Posterior vena cava (tissue), 2 donors: ENCODE measurements at regions of chr5 and their contacts with region 1.

Region 1: DNA sequence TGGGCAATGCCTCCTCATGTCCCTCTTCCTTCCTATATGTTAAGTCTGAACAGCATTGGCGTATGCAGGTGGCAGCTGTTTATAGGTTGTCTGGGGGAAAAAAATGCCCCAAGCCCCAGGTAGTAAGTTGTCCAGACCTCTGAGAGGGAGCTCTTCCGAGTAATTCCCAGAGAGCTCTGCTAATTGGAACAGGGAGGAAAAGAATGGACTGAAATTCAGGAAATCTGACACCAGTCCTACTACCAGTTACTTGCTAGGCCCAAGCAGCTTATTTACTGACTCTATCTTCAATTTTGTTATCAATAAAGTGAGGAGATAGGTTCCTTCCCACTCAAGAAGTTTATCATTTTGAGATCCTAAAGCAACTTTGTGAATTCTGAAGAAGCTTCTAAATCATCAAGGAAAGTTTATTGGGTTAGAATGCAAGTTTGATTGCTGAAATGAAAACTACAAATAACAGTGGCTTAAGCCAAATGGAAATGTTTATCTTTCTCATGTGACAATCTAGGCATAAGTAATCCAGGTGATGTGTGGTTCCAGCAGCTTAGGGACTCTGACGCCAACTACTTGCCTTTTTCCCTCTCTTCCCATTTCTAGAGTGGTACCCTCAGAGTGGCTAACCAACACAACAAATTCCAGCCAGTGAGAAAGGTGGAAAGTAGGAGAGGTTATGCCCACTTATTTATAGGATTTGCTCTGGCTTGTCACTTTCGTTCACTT is 5.6 kb downstream of the STK32A start:
- DNase-seq: no peak

Region 2: GRCh38 chr5:146940295-146940694 is 300.1 kb before region 1 on chr5:
- intact Hi-C with region 1: loop called in 1 of 2 experiments (anchors 5 kb)
- DNase-seq: no peak